ENCODE measurements at regions of chr3 and their contacts with region 1.

Region 1: DNA sequence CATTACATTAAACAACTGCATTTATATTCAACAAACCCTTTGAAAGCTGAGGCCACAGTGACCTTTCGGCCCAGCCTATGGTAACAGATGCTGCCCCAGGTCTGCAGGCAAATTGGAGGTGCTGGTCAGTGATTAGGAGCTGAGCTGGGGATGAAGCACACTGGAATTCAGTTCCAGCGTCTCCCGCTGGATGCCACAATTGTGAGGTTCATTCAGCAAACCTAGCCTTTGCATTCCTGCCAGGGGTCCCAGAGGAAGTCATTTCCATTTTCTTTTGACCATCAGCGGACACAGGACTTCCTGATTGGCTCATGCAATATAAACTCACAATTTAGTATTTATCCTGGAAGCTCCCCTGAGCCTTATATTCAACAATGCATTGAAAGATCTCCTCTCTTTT is 89.5 kb downstream of the IL20RB start:
- DNase-seq: no peak
- ATAC-seq: peak; percentile 89
- H3K4me3 Mint-ChIP-seq: no peak overlapping the region
- H3K27ac Mint-ChIP-seq: 0 out of 2 replicates have a peak overlapping the region, but pooled peaks have one; percentile 12
- H3K4me1 Mint-ChIP-seq: peaks cover 32% of the 10 kb centered on the region
- H3K27me3 Mint-ChIP-seq: no peaks in the 10 kb centered on the region; the same call in 1 of the 2 replicates
- CTCF ChIP-seq: no peak

Region 2: GRCh38 chr3:136994772-136995516 is 52.3 kb before region 1 on chr3:
- CTCF ChIA-PET with region 1: no interaction called
- POLR2A ChIA-PET with region 1: no interaction called
- DNase-seq: no peak
- ATAC-seq: no peak
- H3K4me3 Mint-ChIP-seq: no peak overlapping the region
- H3K27ac Mint-ChIP-seq: no peak overlapping the region
- H3K4me1 Mint-ChIP-seq: no peaks in the 10 kb centered on the region
- H3K27me3 Mint-ChIP-seq: no peaks in the 10 kb centered on the region
- CTCF ChIP-seq: no peak

Region 3: DNA sequence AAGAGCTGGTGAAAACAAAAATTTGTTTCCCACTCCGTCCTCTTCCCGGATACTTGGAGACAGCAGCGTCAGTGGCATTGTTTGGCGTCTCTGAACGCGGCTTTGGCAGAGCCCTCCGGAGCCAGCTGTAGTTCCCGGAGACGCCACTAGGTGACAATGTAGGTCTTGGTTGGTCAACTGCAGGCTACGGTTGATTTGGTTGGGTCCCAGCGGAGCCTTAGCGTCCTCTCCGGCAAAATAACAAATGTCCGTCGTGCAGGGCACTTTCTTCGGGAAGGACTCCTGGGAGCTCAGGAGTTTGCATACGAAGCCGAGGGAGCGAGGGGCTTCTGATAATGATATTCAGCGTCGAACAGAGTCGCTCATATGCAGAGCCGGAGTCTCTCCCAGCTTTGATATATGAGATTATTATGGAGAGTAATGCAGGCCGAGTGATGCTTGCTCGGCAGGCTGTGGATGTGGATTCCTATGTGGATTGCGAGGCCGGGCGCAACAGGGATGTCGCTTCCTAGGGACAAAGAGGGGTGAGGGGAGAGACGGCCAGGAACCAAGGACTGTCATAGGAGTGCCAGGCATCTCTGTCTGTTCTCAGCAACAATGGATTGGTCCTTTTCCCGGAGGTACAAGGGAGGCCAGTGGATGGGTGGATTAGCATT is 14.6 kb before region 1 on chr3:
- CTCF ChIA-PET with region 1: interaction called, 11 read pairs
- POLR2A ChIA-PET with region 1: no interaction called
- DNase-seq: peak; percentile 98
- ATAC-seq: peak; percentile 75
- H3K4me3 Mint-ChIP-seq: peak overlapping the region; percentile 70
- H3K27ac Mint-ChIP-seq: 0 out of 2 replicates have a peak overlapping the region, but pooled peaks have one; percentile 11
- H3K4me1 Mint-ChIP-seq: peaks cover 29% of the 10 kb centered on the region
- H3K27me3 Mint-ChIP-seq: peaks cover 30% of the 10 kb centered on the region
- CTCF ChIP-seq: peak; percentile 96

Measured in WTC11 (cell line).